ENCODE measurements at regions of chr15 and their contacts with region 1.

Region 1: GRCh38 chr15:77633134-77633912 is 611 bp upstream of the LINGO1 start:
- DNase-seq: peak; percentile 87 to 99
- H3K4me3 ChIP-seq: peak overlapping the region; percentile 58 to 68 (median 67)
- H3K27ac ChIP-seq: peak overlapping the region; percentile 84
- H3K4me1 ChIP-seq: peaks cover 22 to 48% (median 33%) of the 10 kb centered on the region in 4 experiments
- H3K27me3 ChIP-seq: no peaks in the 10 kb centered on the region; a peak in 1 of 7 replicates
- CTCF ChIP-seq: peak in 2 of 3 experiments; percentile 100; a peak in 3 of 4 replicates
- EP300 ChIP-seq: no peak
- POLR2A ChIP-seq: peak in 1 of 2 experiments; percentile 68; a peak in 2 of 3 replicates
- RAD21 ChIP-seq: peak; percentile 83 to 89

Region 2: GRCh38 chr15:77599899-77600298 is 33.4 kb before region 1 on chr15:
- CTCF ChIA-PET with region 1: interaction called, 161 read pairs
- POLR2A ChIA-PET with region 1: interaction called, 13 read pairs
- DNase-seq: no peak
- H3K4me3 ChIP-seq: no peak overlapping the region
- H3K27ac ChIP-seq: no peak overlapping the region
- H3K4me1 ChIP-seq: peaks cover 3 to 9% (median 4%) of the 10 kb centered on the region in 4 experiments; a peak in 5 of 7 replicates
- H3K27me3 ChIP-seq: no peaks in the 10 kb centered on the region
- CTCF ChIP-seq: no peak
- EP300 ChIP-seq: no peak
- POLR2A ChIP-seq: no peak
- RAD21 ChIP-seq: no peak

Region 3: GRCh38 chr15:77607111-77607893 is 26.0 kb before region 1 on chr15:
- CTCF ChIA-PET with region 1: interaction called, 161 read pairs
- POLR2A ChIA-PET with region 1: interaction called, 13 read pairs
- DNase-seq: no peak
- H3K4me3 ChIP-seq: no peak overlapping the region
- H3K27ac ChIP-seq: no peak overlapping the region
- H3K4me1 ChIP-seq: peaks cover 4 to 41% (median 22%) of the 10 kb centered on the region in 4 experiments
- H3K27me3 ChIP-seq: no peaks in the 10 kb centered on the region
- CTCF ChIP-seq: no peak
- EP300 ChIP-seq: no peak
- POLR2A ChIP-seq: no peak
- RAD21 ChIP-seq: no peak

Region 4: GRCh38 chr15:77650265-77650664 is 16.9 kb after region 1 on chr15:
- CTCF ChIA-PET with region 1: interaction called, 361 read pairs
- POLR2A ChIA-PET with region 1: interaction called, 7 read pairs
- DNase-seq: peak in 1 of 2 experiments; percentile 85
- H3K4me3 ChIP-seq: no peak overlapping the region
- H3K27ac ChIP-seq: no peak overlapping the region
- H3K4me1 ChIP-seq: peaks cover 0 to 13% (median under 1%) of the 10 kb centered on the region in 4 experiments; a peak in 5 of 7 replicates
- H3K27me3 ChIP-seq: no peaks in the 10 kb centered on the region
- CTCF ChIP-seq: peak; percentile 72 to 81 (median 78)
- EP300 ChIP-seq: no peak
- POLR2A ChIP-seq: no peak
- RAD21 ChIP-seq: peak; percentile 72 to 74

Region 5: DNA sequence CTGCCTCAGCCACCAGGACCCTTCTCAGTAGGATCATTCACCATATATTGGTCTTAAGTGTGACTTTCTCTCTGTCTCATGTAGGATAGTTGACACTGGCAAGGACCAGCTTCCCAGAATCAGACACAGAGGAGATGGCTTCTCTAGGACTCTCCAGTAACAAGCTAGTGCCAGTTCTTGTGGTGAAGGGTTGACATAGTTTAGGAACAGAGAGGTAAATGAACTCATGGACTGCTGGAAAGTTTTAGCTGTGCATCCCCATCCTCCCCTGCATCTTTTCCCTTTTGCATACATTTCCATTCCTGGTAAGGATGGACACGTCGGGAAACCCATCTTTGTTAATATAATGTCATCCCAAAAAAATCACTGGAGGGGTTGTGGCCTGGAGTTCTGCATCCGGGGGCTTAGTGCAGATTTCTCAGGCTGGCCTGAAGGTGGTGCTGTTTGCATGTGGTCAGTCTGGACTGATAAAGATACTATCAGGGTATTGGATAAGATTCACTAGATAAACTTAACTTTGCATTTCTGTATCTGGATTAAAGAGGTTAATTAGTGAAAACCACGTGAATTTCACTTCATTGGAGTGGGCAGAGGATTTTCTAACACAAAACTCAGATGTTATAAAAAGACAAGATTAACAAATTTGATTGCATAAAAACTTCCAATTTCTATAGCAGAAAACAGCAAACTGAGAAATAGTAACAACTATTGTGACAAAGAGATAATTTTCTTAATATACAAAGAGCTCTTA is 333.4 kb after region 1 on chr15:
- CTCF ChIA-PET with region 1: no interaction called
- POLR2A ChIA-PET with region 1: no interaction called
- DNase-seq: peak in 1 of 2 experiments; percentile 69
- H3K4me3 ChIP-seq: no peak overlapping the region
- H3K27ac ChIP-seq: no peak overlapping the region
- H3K4me1 ChIP-seq: no peaks in the 10 kb centered on the region
- H3K27me3 ChIP-seq: no peaks in the 10 kb centered on the region; a peak in 1 of 7 replicates
- CTCF ChIP-seq: peak; percentile 71 to 85 (median 75)
- EP300 ChIP-seq: no peak
- POLR2A ChIP-seq: no peak
- RAD21 ChIP-seq: peak; percentile 84 to 85